Activated CD4-positive, alpha-beta T cell treated with anti-CD3 and anti-CD28 coated beads for 36 hours (primary cell): ENCODE measurements at regions of chr12 and their contacts with region 1.

Region 1: GRCh38 chr12:46124848-46125619 is 134.7 kb upstream of the SCAF11 start:
- DNase-seq: peak; percentile 62
- ATAC-seq: peak; percentile 97
- H3K4me3 Mint-ChIP-seq: peak overlapping the region; percentile 10
- H3K27ac Mint-ChIP-seq: no peak overlapping the region
- H3K4me1 Mint-ChIP-seq: no peaks in the 10 kb centered on the region
- H3K27me3 Mint-ChIP-seq: peaks cover 2% of the 10 kb centered on the region

Region 2: DNA sequence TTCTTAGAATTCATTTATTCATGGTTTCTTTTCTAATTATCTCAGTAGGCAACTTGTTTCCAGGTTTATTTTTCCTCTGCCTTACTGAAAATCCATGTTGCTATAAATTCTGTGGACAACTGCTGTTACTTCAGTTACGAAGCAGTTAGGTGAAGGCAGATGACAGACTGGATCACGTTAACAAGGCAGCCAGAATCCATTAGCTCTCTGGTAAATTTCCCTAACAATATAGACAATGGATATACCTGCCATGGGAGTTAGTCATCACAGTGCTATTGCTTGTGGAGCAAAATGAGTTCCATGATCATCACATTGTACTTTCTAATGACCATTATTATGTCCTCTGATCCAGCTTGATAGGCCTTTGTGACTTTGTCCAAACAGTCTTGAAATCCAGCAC is 1540.4 kb before region 1 on chr12:
- CTCF ChIA-PET with region 1: no interaction called
- POLR2A ChIA-PET with region 1: no interaction called
- intact Hi-C with region 1: no loop called
- DNase-seq: no peak
- ATAC-seq: no peak
- H3K4me3 Mint-ChIP-seq: no peak overlapping the region
- H3K27ac Mint-ChIP-seq: no peak overlapping the region
- H3K4me1 Mint-ChIP-seq: peaks cover 5% of the 10 kb centered on the region
- H3K27me3 Mint-ChIP-seq: no peaks in the 10 kb centered on the region

Region 3: DNA sequence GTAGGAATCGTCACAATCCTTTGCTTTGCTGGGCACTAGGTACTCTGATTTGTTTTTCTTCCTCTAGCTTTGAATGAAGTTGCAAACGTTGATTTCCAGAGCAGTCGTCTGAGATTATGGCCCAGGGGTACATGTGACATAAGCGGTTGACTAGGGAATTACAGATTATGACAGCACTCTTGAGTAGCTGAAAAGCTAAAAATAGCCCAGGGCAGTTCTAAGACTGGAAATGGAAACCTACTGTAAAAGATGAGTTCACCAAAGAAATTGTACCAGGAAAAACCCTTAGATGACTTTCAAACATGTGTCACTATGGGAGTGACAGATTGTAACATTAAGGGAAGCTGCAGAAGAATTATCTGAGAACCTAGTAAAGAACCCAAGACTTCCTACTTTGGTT is 800.6 kb before region 1 on chr12:
- CTCF ChIA-PET with region 1: no interaction called
- POLR2A ChIA-PET with region 1: no interaction called
- intact Hi-C with region 1: no loop called
- DNase-seq: no peak
- ATAC-seq: peak; percentile 81
- H3K4me3 Mint-ChIP-seq: no peak overlapping the region
- H3K27ac Mint-ChIP-seq: no peak overlapping the region
- H3K4me1 Mint-ChIP-seq: peaks cover 13% of the 10 kb centered on the region
- H3K27me3 Mint-ChIP-seq: no peaks in the 10 kb centered on the region

Region 4: GRCh38 chr12:46024099-46024498 is 100.9 kb before region 1 on chr12:
- CTCF ChIA-PET with region 1: no interaction called
- POLR2A ChIA-PET with region 1: no interaction called
- intact Hi-C with region 1: no loop called
- DNase-seq: no peak
- ATAC-seq: no peak
- H3K4me3 Mint-ChIP-seq: no peak overlapping the region
- H3K27ac Mint-ChIP-seq: no peak overlapping the region
- H3K4me1 Mint-ChIP-seq: no peaks in the 10 kb centered on the region
- H3K27me3 Mint-ChIP-seq: peaks cover 8% of the 10 kb centered on the region

Region 5: GRCh38 chr12:46108721-46109120 is 16.3 kb before region 1 on chr12:
- CTCF ChIA-PET with region 1: interaction called, 26 read pairs
- POLR2A ChIA-PET with region 1: no interaction called
- intact Hi-C with region 1: no loop called
- DNase-seq: no peak
- ATAC-seq: no peak
- H3K4me3 Mint-ChIP-seq: no peak overlapping the region
- H3K27ac Mint-ChIP-seq: no peak overlapping the region
- H3K4me1 Mint-ChIP-seq: no peaks in the 10 kb centered on the region
- H3K27me3 Mint-ChIP-seq: no peaks in the 10 kb centered on the region

Region 6: GRCh38 chr12:46303039-46303666 is 178.1 kb after region 1 on chr12:
- CTCF ChIA-PET with region 1: interaction called, 11 read pairs
- POLR2A ChIA-PET with region 1: no interaction called
- intact Hi-C with region 1: loop called (anchors 1 to 2 kb)
- DNase-seq: peak; percentile 62
- ATAC-seq: peak; percentile 85
- H3K4me3 Mint-ChIP-seq: no peak overlapping the region
- H3K27ac Mint-ChIP-seq: no peak overlapping the region
- H3K4me1 Mint-ChIP-seq: no peaks in the 10 kb centered on the region
- H3K27me3 Mint-ChIP-seq: no peaks in the 10 kb centered on the region

Region 7: DNA sequence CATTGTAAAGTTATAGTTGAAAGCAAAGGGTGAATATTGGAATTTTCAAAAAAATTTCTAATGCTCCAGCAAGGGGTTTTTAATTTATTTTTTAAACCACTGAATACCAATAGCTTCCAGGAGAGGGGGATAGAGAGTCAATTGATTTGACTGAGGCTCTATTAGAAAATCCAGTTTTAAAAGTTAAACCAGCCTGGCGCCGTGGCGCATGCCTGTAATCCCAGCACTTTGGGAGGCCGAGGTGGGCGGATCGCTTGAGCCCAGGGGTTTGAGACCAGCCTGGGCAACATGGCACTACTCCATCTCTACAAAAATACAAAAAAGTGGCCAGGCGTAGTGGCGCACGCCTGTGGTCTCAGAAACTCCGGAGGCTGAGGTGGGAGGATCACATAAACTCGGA is 550.7 kb after region 1 on chr12:
- CTCF ChIA-PET with region 1: interaction called, 6 read pairs
- POLR2A ChIA-PET with region 1: no interaction called
- intact Hi-C with region 1: loop called (anchors 2 to 10 kb)
- DNase-seq: no peak
- ATAC-seq: no peak
- H3K4me3 Mint-ChIP-seq: no peak overlapping the region
- H3K27ac Mint-ChIP-seq: no peak overlapping the region
- H3K4me1 Mint-ChIP-seq: peaks cover 8% of the 10 kb centered on the region
- H3K27me3 Mint-ChIP-seq: no peaks in the 10 kb centered on the region

Region 8: DNA sequence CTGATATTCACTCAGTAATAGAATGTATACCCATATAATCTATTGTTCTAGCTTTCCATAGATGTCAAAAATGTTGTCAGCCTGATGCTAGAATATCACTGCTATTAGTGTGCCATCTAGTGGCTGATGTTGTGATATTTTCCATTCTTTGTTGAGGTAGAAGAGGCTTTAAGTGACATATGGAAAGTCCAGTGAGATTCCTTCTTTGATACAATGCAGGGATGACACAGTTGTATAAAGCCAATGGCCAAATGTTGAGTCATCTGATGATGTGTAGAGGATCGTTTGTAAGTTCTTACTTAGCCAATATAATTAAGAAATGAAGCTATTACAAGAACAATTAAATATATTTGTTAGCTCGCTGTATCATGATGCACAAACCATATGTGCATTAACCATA is 896.3 kb after region 1 on chr12:
- CTCF ChIA-PET with region 1: interaction called, 10 read pairs
- POLR2A ChIA-PET with region 1: no interaction called
- intact Hi-C with region 1: loop called (anchors 1 to 5 kb)
- DNase-seq: no peak
- ATAC-seq: peak; percentile 75
- H3K4me3 Mint-ChIP-seq: no peak overlapping the region
- H3K27ac Mint-ChIP-seq: no peak overlapping the region
- H3K4me1 Mint-ChIP-seq: peaks cover 3% of the 10 kb centered on the region
- H3K27me3 Mint-ChIP-seq: peaks cover 7% of the 10 kb centered on the region